Tibial artery (tissue), 4 donors: ENCODE measurements at regions of chr5 and their contacts with region 1.

Region 1: DNA sequence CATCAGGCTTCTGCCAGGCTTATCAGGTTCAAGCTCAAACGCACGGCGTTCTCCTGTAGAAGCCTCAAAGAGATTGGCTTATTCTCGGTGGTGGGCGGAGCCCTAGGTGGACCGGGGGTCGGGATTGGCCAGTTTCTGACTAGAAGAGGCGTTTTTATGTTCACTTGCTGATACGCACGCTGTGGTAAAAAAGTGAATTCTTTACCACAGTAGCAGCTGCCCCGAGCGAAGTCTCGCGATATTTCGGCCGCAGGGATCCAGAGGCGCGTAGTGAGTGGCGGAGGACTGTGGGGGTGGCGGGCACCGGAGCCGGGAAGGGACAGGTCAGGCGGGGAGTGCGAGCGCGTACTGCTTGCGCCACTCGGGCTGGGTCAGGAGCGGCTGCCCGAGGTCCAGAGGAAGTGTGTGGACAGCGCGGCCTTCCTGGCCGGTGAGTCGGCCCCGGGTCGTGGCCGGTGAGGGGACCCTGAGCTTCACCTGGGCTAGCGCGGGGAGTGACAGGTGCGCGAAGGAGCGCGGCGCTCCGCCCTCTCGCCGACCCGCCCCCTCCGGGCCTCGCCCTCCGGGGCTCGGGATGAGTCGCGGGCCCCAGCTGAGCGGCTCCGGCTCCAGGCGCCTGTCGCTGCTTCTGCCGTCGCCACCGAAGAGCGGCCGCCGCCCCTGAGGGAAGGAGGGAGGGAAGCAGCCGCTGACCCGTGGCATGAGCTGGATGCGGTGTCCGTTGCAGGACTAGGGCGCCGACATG is at the start of gene DMXL1:
- DNase-seq: peak; percentile 100
- H3K4me3 ChIP-seq: peak within 1 kb of the TSS; percentile 83 to 98
- H3K27ac ChIP-seq: peak within 1 kb of the TSS; percentile 97 to 99
- H3K4me1 ChIP-seq: peaks cover 0 to 49% (median 15%) of the 10 kb centered on the region in 4 donors
- H3K27me3 ChIP-seq: no peaks in the 10 kb centered on the region
- CTCF ChIP-seq: no peak

Region 2: GRCh38 chr5:118987988-118988865 is 82.8 kb before region 1 on chr5 and contains the start of gene DTWD2:
- intact Hi-C with region 1: loop called (anchors 10 kb)
- DNase-seq: peak; percentile 89 to 95
- H3K4me3 ChIP-seq: peak within 1 kb of the TSS; percentile 71 to 88
- H3K27ac ChIP-seq: peak within 1 kb of the TSS; percentile 87 to 94
- H3K4me1 ChIP-seq: peaks cover 0 to 15% (median 5%) of the 10 kb centered on the region in 4 donors
- H3K27me3 ChIP-seq: no peaks in the 10 kb centered on the region
- CTCF ChIP-seq: peak; percentile 87

Region 3: DNA sequence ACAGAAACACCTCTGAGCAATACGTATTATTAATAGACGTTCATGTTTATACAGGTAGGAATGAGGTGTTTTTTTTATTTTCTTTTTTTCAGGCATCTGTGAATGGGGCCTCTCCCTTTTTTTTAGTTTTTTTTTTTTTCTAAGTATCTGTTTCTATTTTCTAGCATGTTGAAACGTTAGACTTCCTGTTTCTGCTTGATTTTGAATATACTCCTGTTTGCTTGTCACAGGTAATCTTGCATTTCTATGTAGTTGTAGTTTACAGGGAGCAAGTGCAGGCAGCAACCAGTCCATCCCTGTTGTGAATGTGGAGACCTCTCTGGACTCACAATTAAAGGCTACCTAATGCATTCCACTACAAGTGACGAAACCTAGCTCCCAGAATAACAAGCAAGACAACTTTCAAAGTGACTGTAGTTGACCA is 262.0 kb after region 1 on chr5:
- intact Hi-C with region 1: loop called (anchors 5 kb)
- DNase-seq: no peak
- H3K4me3 ChIP-seq: no peak overlapping the region
- H3K27ac ChIP-seq: no peak overlapping the region
- H3K4me1 ChIP-seq: peaks cover 0 to 52% (median 21%) of the 10 kb centered on the region in 4 donors
- H3K27me3 ChIP-seq: no peaks in the 10 kb centered on the region
- CTCF ChIP-seq: no peak

Region 4: DNA sequence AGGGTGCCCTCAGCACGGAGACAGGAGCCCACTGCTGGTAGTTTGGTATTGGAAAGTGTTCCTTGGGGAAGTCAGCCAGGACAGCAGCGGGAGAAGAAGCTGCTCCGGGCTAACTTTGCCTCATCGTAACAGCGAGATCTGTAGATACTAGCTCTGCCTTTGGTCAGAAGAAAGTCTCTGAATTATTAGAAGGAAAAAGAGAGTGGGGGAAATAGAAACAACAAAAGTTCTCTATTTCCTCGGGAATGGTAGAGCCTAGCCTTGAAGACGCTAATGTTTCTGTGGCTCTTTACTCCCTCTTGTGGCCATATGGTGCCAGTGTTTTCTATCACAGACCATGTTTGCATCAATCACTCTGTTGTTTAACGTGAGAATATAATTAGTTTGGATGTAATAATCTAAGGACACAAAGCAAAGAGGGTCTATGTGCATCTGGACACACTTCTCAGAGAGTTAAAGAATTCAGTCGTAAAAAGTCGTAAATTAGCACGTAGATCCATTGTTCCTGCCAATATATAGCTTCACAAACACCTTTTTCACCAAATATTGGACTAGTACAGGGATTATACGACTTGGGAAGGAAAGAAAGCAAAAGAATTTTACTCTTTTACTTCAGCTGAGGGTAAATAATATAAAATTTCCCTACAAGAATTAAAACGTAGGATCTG is 341.1 kb after region 1 on chr5:
- intact Hi-C with region 1: loop called (anchors 10 kb)
- DNase-seq: peak; percentile 52 to 78
- H3K4me3 ChIP-seq: peak overlapping the region; percentile 48 to 55
- H3K27ac ChIP-seq: peak overlapping the region; percentile 71 to 77
- H3K4me1 ChIP-seq: peaks cover 0 to 17% (median 3%) of the 10 kb centered on the region in 4 donors
- H3K27me3 ChIP-seq: no peaks in the 10 kb centered on the region
- CTCF ChIP-seq: peak; percentile 95

Region 5: GRCh38 chr5:119483155-119483554 is 412.2 kb after region 1 on chr5:
- intact Hi-C with region 1: no loop called
- DNase-seq: no peak
- H3K4me3 ChIP-seq: no peak overlapping the region
- H3K27ac ChIP-seq: no peak overlapping the region
- H3K4me1 ChIP-seq: no peaks in the 10 kb centered on the region
- H3K27me3 ChIP-seq: no peaks in the 10 kb centered on the region
- CTCF ChIP-seq: no peak